ENCODE measurements at regions of chr1 and their contacts with region 1.

Region 1: GRCh38 chr1:112466078-112466660 is 42.6 kb upstream of the WNT2B start:
- DNase-seq: peak; percentile 97
- H3K4me3 ChIP-seq: peak overlapping the region in 1 of 3 experiments; percentile 5
- H3K27ac ChIP-seq: peak overlapping the region; percentile 59
- H3K4me1 ChIP-seq: peaks cover 28% of the 10 kb centered on the region
- H3K27me3 ChIP-seq: no peaks in the 10 kb centered on the region
- CTCF ChIP-seq: peak; percentile 82 to 85
- POLR2A ChIP-seq: peak; percentile 71

Region 2: DNA sequence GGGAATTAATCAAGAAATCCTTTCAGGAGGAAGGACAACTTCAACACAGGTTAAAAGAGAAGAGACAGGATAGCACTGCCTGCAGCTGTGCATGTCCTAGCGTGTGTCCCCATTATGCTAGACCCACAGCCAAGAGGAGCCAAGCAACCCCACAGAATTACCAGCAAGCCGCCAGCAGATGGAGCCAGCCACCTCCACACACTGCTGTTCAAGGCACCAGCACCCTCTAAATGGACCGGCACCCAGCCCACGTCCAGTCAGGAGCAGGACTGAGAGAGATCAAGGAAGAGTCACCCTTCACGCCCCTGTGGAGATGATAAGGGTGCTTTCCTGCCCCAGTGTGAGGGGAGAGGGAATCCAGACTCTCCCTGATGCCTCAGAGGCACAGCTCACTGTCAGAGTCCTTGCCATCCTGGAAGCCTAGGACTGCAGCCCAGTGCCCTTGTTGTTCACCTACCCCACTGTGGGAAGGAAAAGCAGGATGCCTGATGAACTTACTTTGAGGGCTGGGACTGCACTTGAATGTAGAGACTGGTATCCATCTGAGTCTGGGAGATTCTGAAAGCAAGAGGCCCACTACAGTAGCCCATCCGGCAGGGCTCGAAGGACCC is 107.3 kb before region 1 on chr1:
- CTCF ChIA-PET with region 1: interaction called, 21 read pairs
- POLR2A ChIA-PET with region 1: no interaction called
- dilution Hi-C with region 1: no loop called
- intact Hi-C with region 1: no loop called
- DNase-seq: peak; percentile 65
- H3K4me3 ChIP-seq: no peak overlapping the region
- H3K27ac ChIP-seq: no peak overlapping the region
- H3K4me1 ChIP-seq: no peaks in the 10 kb centered on the region
- H3K27me3 ChIP-seq: peaks cover 14 to 30% of the 10 kb centered on the region in 2 experiments
- CTCF ChIP-seq: peak; percentile 79 to 88
- POLR2A ChIP-seq: no peak

Region 3: DNA sequence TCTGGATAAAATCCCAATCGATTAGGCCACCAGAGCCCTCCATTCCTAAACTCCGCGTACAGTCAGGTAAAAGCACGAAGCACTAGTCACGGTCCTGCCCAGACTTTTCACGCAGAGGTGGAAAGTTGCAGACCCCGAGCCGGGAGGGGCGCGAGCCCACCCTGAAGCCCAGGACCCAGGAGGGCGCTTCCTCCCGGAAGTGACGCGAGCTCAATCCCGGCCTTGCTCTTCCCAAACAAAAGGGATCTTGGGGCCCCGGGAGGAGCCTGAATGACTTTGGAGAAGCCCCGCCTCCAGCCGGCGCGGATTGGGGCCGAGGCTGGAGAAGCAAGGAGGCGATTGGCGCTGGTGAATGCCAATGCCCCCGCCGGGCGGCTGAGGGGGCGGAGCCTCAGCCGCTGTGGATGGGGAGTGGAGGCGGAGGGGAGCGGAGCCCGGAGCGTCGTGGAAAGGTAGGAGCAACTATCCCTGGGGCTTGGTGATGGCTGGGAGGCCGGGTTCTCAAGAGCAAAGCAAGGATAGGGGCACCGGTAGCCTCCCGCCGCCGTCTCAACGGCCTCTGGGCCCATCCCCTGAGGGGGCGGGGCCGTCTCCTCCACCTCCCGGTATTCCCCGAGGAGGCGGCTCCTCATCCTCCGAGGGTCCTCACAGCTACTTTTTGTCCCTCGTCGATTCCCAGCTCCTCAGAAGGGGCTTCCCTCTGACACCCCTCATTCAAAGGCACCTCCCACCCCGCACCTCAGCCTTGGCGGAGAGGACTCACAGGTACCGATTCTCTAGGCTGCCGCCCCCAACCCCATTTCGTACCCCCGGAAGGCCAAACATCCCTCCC is 70.1 kb before region 1 on chr1 and contains the start of gene CTTNBP2NL:
- CTCF ChIA-PET with region 1: interaction called, 89 read pairs
- POLR2A ChIA-PET with region 1: interaction called, 4 read pairs
- dilution Hi-C with region 1: no loop called
- intact Hi-C with region 1: loop called (anchors 1 kb)
- DNase-seq: peak; percentile 95
- H3K4me3 ChIP-seq: peak within 1 kb of the TSS; percentile 86 to 94 (median 91)
- H3K27ac ChIP-seq: peak within 1 kb of the TSS; percentile 97
- H3K4me1 ChIP-seq: peaks cover 64% of the 10 kb centered on the region
- H3K27me3 ChIP-seq: no peaks in the 10 kb centered on the region
- CTCF ChIP-seq: no peak
- POLR2A ChIP-seq: peak; percentile 91
- total RNA-seq, gene CTTNBP2NL: 94.4 and 96.4 TPM in 2 replicates

Region 4: DNA sequence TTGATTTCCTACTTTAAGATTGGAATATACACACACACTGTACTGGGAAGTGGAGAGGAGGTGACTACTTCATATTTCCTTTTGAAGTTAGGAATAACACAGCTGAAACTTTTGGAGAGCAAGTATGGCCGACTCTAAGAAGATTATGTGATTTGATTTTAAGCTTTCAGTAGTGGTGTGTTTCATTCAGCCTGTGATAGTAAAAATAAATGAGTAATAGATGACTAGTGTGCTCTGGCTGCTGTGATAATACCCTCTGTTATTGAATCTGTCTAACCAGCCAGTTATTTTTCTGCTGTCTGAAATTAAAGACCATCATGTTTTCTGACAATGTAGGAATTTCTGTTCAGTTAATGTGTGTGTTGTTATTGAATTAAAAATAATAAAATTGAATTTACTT is 21.9 kb before region 1 on chr1:
- CTCF ChIA-PET with region 1: interaction called, 14 read pairs
- POLR2A ChIA-PET with region 1: no interaction called
- dilution Hi-C with region 1: no loop called
- intact Hi-C with region 1: loop called (anchors 2 kb)
- DNase-seq: peak; percentile 84
- H3K4me3 ChIP-seq: no peak overlapping the region
- H3K27ac ChIP-seq: peak overlapping the region; percentile 95
- H3K4me1 ChIP-seq: peaks cover 45% of the 10 kb centered on the region
- H3K27me3 ChIP-seq: no peaks in the 10 kb centered on the region
- CTCF ChIP-seq: no peak
- POLR2A ChIP-seq: no peak

Region 5: GRCh38 chr1:112492076-112492475 is 25.9 kb after region 1 on chr1:
- CTCF ChIA-PET with region 1: no interaction called
- POLR2A ChIA-PET with region 1: no interaction called
- dilution Hi-C with region 1: no loop called
- intact Hi-C with region 1: no loop called
- DNase-seq: no peak
- H3K4me3 ChIP-seq: no peak overlapping the region
- H3K27ac ChIP-seq: no peak overlapping the region
- H3K4me1 ChIP-seq: no peaks in the 10 kb centered on the region
- H3K27me3 ChIP-seq: no peaks in the 10 kb centered on the region
- CTCF ChIP-seq: no peak
- POLR2A ChIP-seq: no peak

Region 6: DNA sequence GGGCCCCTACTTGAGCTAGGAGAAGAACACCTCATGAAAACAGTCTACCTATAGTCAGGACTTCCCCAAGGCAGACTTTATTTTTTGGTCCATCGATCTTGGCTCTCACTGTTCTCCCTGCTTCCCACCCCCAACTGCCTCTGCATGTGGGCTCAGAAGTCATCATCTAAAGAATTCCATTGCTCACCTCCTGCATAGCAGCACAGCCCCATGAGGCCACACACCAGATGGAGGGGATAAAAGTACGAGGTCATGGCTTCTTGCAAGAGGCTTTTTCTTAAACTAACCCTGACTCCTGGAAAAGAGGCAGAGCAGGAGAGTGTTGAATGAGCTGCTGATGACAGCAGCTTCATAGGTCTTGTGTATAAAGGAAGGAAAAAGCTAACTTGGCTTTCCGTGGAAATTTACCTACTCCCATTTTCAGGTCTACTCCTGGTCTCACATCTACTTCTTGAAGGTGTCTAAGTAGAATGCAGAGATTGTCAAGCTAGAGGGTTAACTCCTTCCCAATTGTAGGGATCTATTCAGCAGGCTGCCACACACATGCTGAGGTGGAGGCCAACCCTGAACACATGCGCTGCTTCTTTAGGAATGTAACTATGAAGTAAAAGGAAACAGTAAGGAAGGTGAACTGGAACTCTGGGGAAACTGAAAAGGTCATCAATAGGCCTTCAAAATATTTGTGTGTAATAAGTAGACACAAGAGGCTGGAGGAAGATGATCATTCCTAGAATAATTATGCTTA is 61.3 kb after region 1 on chr1:
- CTCF ChIA-PET with region 1: no interaction called
- POLR2A ChIA-PET with region 1: no interaction called
- dilution Hi-C with region 1: no loop called
- intact Hi-C with region 1: no loop called
- DNase-seq: no peak
- H3K4me3 ChIP-seq: no peak overlapping the region
- H3K27ac ChIP-seq: no peak overlapping the region
- H3K4me1 ChIP-seq: no peaks in the 10 kb centered on the region
- H3K27me3 ChIP-seq: no peaks in the 10 kb centered on the region
- CTCF ChIP-seq: no peak
- POLR2A ChIP-seq: no peak

Region 7: GRCh38 chr1:112706908-112707663 is 240.9 kb after region 1 on chr1 and contains the start of gene RHOC:
- CTCF ChIA-PET with region 1: no interaction called
- POLR2A ChIA-PET with region 1: no interaction called
- dilution Hi-C with region 1: no loop called
- intact Hi-C with region 1: loop called (anchors 1 kb)
- DNase-seq: peak; percentile 88
- H3K4me3 ChIP-seq: peak within 1 kb of the TSS; percentile 81 to 90 (median 89)
- H3K27ac ChIP-seq: peak within 1 kb of the TSS; percentile 88
- H3K4me1 ChIP-seq: peaks cover 40% of the 10 kb centered on the region
- H3K27me3 ChIP-seq: no peaks in the 10 kb centered on the region
- CTCF ChIP-seq: peak; percentile 97 to 98
- POLR2A ChIP-seq: peak; percentile 83
- total RNA-seq, gene RHOC: 652 and 699 TPM in 2 replicates

Measured in endothelial cell of umbilical vein (primary cell).